PC-9 (cell line): ENCODE measurements at regions of chr14 and their contacts with region 1.

Region 1: DNA sequence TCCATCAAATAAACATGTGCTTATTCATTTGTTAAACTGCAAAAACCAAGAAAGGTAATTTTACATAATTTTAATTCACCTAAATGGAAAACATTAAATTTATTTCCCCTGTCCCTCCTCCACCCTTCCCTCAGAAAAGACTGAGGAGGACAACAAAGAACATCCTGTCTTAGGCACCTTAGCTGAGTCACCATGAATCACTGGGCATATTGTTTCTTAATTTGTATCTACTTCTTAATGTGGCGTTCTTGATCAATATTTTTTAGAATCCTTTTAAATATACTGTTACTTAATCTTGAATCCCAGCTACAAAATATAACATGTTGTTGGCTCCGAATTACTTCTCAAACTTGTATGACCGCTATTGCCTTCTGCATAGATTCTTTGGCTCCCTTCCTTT is 23.5 kb downstream of the SIX6 start:
- DNase-seq: no peak
- H3K4me3 ChIP-seq: no peak overlapping the region
- H3K27ac ChIP-seq: no peak overlapping the region
- H3K4me1 ChIP-seq: no peaks in the 10 kb centered on the region
- H3K27me3 ChIP-seq: no peaks in the 10 kb centered on the region
- CTCF ChIP-seq: no peak

Region 2: GRCh38 chr14:59819446-59820088 is 712.9 kb before region 1 on chr14:
- CTCF ChIA-PET with region 1: no interaction called
- POLR2A ChIA-PET with region 1: no interaction called
- intact Hi-C with region 1: no loop called
- DNase-seq: no peak
- H3K4me3 ChIP-seq: no peak overlapping the region
- H3K27ac ChIP-seq: no peak overlapping the region
- H3K4me1 ChIP-seq: no peaks in the 10 kb centered on the region
- H3K27me3 ChIP-seq: no peaks in the 10 kb centered on the region
- CTCF ChIP-seq: no peak

Region 3: GRCh38 chr14:60420050-60420449 is 112.4 kb before region 1 on chr14:
- CTCF ChIA-PET with region 1: no interaction called
- POLR2A ChIA-PET with region 1: no interaction called
- intact Hi-C with region 1: no loop called
- DNase-seq: no peak
- H3K4me3 ChIP-seq: no peak overlapping the region
- H3K27ac ChIP-seq: no peak overlapping the region
- H3K4me1 ChIP-seq: no peaks in the 10 kb centered on the region
- H3K27me3 ChIP-seq: no peaks in the 10 kb centered on the region
- CTCF ChIP-seq: no peak

Region 4: DNA sequence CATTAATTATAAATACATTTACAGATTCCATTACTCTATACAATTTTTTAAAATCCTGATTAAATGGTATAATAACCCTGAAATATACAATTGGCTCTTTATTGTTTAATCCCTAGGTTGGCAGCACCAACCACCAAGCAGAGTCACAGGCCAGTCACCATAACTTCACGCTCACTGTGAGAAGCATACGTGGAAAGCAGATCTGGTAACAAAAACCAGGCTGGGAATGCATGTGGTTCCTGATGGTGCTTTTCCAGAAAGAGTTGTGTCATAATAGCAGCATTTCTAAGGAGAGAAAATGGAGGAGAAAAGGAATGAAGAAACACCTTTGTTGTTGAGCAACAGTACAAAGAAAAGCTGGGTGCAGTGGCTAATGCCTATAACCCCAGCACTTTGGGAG is 42.6 kb after region 1 on chr14:
- CTCF ChIA-PET with region 1: interaction called, 12 read pairs
- POLR2A ChIA-PET with region 1: no interaction called
- intact Hi-C with region 1: no loop called
- DNase-seq: no peak
- H3K4me3 ChIP-seq: no peak overlapping the region
- H3K27ac ChIP-seq: no peak overlapping the region
- H3K4me1 ChIP-seq: no peaks in the 10 kb centered on the region
- H3K27me3 ChIP-seq: no peaks in the 10 kb centered on the region
- CTCF ChIP-seq: no peak